Psoas muscle (tissue), 8 donors: ENCODE measurements at regions of chr6 and their contacts with region 1.

Region 1: DNA sequence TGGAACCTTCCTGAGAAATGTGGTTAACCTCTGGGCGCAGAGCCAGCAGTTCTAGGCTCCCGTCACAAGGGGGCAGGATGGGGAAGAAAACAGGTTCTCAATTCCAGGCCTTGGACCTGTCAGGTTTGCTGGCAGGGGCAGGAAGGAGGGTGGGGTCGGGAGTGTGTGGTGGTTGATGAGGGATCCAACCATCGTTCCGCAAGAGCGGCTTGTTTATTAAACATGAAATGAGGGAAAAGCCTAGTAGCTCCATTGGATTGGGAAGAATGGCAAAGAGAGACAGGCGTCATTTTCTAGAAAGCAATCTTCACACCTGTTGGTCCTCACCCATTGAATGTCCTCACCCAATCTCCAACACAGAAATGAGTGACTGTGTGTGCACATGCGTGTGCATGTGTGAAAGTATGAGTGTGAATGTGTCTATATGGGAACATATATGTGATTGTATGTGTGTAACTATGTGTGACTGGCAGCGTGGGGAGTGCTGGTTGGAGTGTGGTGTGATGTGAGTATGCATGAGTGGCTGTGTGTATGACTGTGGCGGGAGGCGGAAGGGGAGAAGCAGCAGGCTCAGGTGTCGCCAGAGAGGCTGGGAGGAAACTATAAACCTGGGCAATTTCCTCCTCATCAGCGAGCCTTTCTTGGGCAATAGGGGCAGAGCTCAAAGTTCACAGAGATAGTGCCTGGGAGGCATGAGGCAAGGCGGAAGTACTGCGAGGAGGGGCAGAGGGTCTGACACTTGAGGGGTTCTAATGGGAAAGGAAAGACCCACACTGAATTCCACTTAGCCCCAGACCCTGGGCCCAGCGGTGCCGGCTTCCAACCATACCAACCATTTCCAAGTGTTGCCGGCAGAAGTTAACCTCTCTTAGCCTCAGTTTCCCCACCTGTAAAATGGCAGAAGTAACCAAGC is 29.6 kb downstream of the SRSF3 start:
- DNase-seq: peak; percentile 85 to 90
- ATAC-seq: peak; percentile 75 to 88 (median 85)
- H3K4me3 ChIP-seq: no peak overlapping the region
- H3K27ac ChIP-seq: no peak overlapping the region
- H3K4me1 ChIP-seq: peaks cover 16% of the 10 kb centered on the region
- H3K27me3 ChIP-seq: no peaks in the 10 kb centered on the region
- CTCF ChIP-seq: peak; percentile 80

Region 2: GRCh38 chr6:36724514-36725390 is 100.9 kb after region 1 on chr6:
- intact Hi-C with region 1: loop called in 1 of 2 experiments (anchors 5 kb)
- DNase-seq: peak; percentile 66 to 80
- ATAC-seq: peak; percentile 80 to 89 (median 84)
- H3K4me3 ChIP-seq: no peak overlapping the region
- H3K27ac ChIP-seq: no peak overlapping the region
- H3K4me1 ChIP-seq: no peaks in the 10 kb centered on the region
- H3K27me3 ChIP-seq: no peaks in the 10 kb centered on the region
- CTCF ChIP-seq: peak; percentile 54

Region 3: DNA sequence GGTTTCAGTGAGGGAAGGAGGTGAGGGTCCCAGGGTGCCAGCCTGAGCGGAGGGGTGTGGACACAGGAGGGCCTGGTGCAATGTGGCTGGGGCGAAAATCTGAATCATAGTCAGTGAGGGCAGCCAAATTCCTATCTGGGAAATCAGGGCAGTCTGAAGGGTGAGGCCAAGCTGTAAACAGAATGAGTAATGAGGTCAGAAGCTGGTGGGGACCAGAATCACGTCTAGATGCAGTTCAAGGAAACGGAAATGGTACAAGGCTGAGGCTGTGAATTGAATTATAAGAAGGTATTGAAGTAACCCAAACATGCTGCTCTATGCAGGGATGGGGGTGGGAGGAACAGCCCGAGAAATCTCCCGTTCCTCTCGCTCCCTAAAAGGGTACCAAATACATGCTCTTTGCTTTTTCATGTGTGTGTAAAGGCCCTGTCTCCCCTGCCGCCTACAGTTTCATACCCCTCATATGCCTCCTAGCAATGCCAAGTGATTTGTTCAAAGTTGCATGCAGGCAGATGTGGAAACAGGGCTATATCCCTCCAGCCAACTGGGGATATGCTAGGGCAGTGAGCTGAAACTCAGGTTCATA is 510.9 kb after region 1 on chr6:
- intact Hi-C with region 1: no loop called
- DNase-seq: peak; percentile 64 to 76
- ATAC-seq: peak; percentile 66 to 75 (median 74)
- H3K4me3 ChIP-seq: no peak overlapping the region
- H3K27ac ChIP-seq: peak overlapping the region; percentile 98
- H3K4me1 ChIP-seq: peaks cover 59% of the 10 kb centered on the region
- H3K27me3 ChIP-seq: no peaks in the 10 kb centered on the region
- CTCF ChIP-seq: no peak